B cell (primary cell): ENCODE measurements at regions of chr7 and their contacts with region 1.

Region 1: DNA sequence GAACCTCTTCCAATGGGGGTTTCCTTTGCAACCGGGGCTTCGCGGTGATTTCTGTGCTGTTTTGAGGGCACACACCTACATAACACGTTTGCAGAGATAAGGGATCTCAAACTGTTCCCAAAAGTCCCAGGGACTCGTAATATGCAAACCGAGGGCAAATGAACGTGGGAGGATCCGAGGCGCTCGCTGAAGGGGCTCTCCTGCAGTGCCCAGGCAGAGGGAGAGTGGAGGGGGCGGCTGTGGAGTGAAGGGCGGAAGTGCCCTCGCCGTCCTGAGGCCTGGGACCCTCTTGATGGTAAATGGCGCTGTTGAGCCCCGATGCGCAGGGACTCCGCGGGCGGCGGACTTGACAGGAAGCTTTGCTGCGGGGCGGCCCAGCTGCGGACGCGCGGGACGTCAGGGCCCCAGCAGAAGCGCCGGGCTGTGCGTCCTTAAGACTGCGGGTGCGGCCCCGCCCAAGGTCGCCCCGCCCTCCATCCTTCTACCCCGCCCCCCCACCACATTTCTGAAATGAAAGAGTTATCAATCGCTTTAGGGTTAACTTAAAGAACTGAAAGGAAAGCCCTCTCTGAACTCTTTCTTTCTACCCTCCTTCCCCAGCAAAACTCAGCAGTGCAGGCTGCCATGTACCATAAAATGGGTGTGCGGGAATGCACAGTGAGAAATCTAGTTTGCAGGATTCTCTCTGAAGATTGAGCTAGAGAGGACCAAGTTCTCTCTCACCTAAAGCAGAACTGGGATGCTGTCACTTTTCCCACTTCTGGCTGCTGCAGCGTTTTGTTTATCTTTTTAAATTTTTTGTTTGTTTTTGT is 151.8 kb upstream of the YAE1 start:
- DNase-seq: peak; percentile 62
- ATAC-seq: peak; percentile 86
- H3K4me3 ChIP-seq: peak overlapping the region; percentile 41 to 92 (median 71)
- H3K4me3 Mint-ChIP-seq: peak overlapping the region; percentile 85
- H3K27ac ChIP-seq: peak overlapping the region in 1 of 2 donors; percentile 23
- H3K27ac Mint-ChIP-seq: no peak overlapping the region
- H3K4me1 ChIP-seq: peaks cover 3 to 13% of the 10 kb centered on the region in 2 donors
- H3K4me1 Mint-ChIP-seq: peaks cover 11% of the 10 kb centered on the region
- H3K27me3 ChIP-seq: peaks cover 0 to 5% (median 0%) of the 10 kb centered on the region in 4 experiments
- H3K27me3 Mint-ChIP-seq: peaks cover 23% of the 10 kb centered on the region
- CTCF ChIP-seq: no peak

Region 2: DNA sequence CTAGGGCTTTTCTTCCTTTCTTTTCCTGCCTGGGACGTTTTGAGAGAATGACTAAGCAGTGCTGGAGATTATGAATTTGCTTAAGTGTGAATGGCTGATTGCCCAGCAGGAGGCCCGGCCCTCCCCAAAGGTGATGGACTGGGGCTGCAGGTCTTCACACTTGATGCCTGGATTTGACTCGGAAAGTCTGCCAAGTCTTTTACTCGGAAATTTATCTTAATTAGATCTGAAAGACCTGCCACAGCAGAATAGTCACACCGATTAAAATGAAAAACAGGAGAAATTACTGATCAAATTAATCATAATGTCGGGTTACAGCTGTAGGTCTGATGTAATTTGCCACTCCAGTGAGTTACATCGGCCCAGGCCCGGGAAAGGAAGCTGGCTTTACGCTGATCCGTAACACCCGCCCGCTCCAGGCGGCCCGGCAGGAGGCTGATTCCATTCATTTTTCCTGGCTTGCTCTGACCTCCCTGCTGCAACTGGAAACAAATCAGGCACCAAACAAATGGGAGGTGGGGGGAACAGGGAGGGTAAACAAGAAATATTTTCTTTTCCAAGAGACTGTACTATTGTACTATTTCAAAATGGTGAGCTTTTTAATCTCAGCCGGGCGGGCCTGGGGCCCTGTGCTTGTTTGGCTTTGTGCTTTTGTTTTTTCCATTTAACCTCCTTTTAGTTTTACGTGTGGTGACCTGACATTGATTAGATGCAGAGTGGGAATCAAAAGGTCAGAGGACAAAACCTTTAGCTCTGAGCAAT is 60.6 kb before region 1 on chr7:
- CTCF ChIA-PET with region 1: no interaction called
- POLR2A ChIA-PET with region 1: no interaction called
- intact Hi-C with region 1: loop called (anchors 10 kb)
- DNase-seq: no peak
- ATAC-seq: no peak
- H3K4me3 ChIP-seq: no peak overlapping the region
- H3K4me3 Mint-ChIP-seq: no peak overlapping the region
- H3K27ac ChIP-seq: no peak overlapping the region
- H3K27ac Mint-ChIP-seq: no peak overlapping the region
- H3K4me1 ChIP-seq: peaks cover 4 to 6% of the 10 kb centered on the region in 2 donors
- H3K4me1 Mint-ChIP-seq: peaks cover 12% of the 10 kb centered on the region
- H3K27me3 ChIP-seq: no peaks in the 10 kb centered on the region
- H3K27me3 Mint-ChIP-seq: peaks cover 4% of the 10 kb centered on the region
- CTCF ChIP-seq: no peak

Region 3: DNA sequence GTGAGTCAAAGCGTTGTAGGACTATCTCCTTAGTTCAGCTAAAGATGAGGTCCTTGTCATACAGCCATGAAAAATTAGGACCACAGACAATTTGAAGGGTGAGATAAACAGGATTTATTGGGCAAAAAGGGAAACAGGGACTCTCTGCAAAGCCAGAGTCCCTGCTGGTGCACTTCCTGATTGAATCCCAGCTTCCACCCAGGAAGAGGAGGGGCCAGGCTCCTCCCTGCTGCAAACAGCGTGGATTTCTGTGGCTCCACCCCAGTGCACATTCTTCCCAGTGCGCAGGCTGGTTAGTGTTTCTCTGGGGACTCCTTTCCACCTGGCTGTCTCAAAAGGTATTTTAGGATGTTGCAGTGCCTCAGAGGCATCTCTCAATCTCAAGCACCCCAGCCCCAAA is 13.6 kb before region 1 on chr7:
- CTCF ChIA-PET with region 1: no interaction called
- POLR2A ChIA-PET with region 1: no interaction called
- intact Hi-C with region 1: no loop called
- DNase-seq: no peak
- ATAC-seq: no peak
- H3K4me3 ChIP-seq: no peak overlapping the region
- H3K4me3 Mint-ChIP-seq: no peak overlapping the region
- H3K27ac ChIP-seq: no peak overlapping the region
- H3K27ac Mint-ChIP-seq: no peak overlapping the region
- H3K4me1 ChIP-seq: no peaks in the 10 kb centered on the region
- H3K4me1 Mint-ChIP-seq: no peaks in the 10 kb centered on the region
- H3K27me3 ChIP-seq: no peaks in the 10 kb centered on the region
- H3K27me3 Mint-ChIP-seq: peaks cover 17% of the 10 kb centered on the region
- CTCF ChIP-seq: no peak

Region 4: GRCh38 chr7:39501358-39501757 is 86.9 kb after region 1 on chr7:
- CTCF ChIA-PET with region 1: no interaction called
- POLR2A ChIA-PET with region 1: no interaction called
- intact Hi-C with region 1: no loop called
- DNase-seq: no peak
- ATAC-seq: no peak
- H3K4me3 ChIP-seq: no peak overlapping the region
- H3K4me3 Mint-ChIP-seq: no peak overlapping the region
- H3K27ac ChIP-seq: no peak overlapping the region
- H3K27ac Mint-ChIP-seq: no peak overlapping the region
- H3K4me1 ChIP-seq: no peaks in the 10 kb centered on the region
- H3K4me1 Mint-ChIP-seq: no peaks in the 10 kb centered on the region
- H3K27me3 ChIP-seq: no peaks in the 10 kb centered on the region
- H3K27me3 Mint-ChIP-seq: peaks cover 33% of the 10 kb centered on the region
- CTCF ChIP-seq: no peak